ENCODE measurements at regions of chr11 and their contacts with region 1.

Region 1: DNA sequence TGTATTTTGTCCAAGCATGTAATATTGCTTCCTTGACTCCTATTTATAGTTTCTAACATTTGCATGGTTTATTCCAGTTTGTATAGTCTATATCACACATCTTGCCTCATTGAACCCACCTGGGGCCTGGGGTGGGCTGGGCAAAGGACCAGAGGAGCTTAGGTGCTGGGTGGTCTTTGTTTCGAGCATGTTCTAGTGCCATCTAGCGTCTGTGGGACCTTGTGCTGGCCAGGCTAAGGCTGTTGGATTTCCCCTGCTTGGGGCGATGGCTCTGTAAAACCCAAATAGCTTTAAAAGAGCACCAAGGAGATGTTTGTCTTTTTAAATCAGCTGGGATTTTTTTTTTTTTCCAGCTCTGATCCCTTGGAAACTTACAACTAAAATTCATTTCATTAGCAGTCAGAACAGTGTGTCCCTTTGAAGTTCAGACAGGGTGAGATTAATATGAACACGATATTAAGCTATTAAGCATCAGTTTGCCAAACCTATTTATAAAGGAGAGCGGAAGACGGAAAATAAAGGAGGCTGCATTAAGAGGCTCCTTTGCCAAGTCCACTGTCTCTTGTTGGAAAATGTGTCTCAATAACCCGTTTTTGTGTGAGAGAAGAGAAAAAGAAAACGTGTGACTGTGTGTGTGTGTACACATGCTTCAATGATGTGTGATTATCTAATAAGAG is 157.4 kb downstream of the COMMD9 start:
- DNase-seq: peak in 4 of 5 donors; percentile 48 to 57 (median 56)
- ATAC-seq: peak; percentile 75 to 86 (median 84)
- H3K4me3 ChIP-seq: no peak overlapping the region
- H3K27ac ChIP-seq: no peak overlapping the region
- H3K4me1 ChIP-seq: peaks cover 0 to 12% (median 0%) of the 10 kb centered on the region in 12 donors
- H3K27me3 ChIP-seq: peaks cover 0 to 8% (median 0%) of the 10 kb centered on the region in 9 donors
- CTCF ChIP-seq: peak; percentile 51 to 92 (median 74)
- POLR2A ChIP-seq: no peak

Region 2: GRCh38 chr11:35711173-35711910 is 420.5 kb before region 1 on chr11:
- intact Hi-C with region 1: loop called in 1 of 10 experiments (anchors 2 kb)
- DNase-seq: no peak
- ATAC-seq: no peak
- H3K4me3 ChIP-seq: no peak overlapping the region
- H3K27ac ChIP-seq: no peak overlapping the region
- H3K4me1 ChIP-seq: peaks cover 0 to 18% (median 2%) of the 10 kb centered on the region in 12 donors
- H3K27me3 ChIP-seq: no peaks in the 10 kb centered on the region
- CTCF ChIP-seq: peak in 2 of 12 donors; percentile 14 to 21
- POLR2A ChIP-seq: no peak

Region 3: DNA sequence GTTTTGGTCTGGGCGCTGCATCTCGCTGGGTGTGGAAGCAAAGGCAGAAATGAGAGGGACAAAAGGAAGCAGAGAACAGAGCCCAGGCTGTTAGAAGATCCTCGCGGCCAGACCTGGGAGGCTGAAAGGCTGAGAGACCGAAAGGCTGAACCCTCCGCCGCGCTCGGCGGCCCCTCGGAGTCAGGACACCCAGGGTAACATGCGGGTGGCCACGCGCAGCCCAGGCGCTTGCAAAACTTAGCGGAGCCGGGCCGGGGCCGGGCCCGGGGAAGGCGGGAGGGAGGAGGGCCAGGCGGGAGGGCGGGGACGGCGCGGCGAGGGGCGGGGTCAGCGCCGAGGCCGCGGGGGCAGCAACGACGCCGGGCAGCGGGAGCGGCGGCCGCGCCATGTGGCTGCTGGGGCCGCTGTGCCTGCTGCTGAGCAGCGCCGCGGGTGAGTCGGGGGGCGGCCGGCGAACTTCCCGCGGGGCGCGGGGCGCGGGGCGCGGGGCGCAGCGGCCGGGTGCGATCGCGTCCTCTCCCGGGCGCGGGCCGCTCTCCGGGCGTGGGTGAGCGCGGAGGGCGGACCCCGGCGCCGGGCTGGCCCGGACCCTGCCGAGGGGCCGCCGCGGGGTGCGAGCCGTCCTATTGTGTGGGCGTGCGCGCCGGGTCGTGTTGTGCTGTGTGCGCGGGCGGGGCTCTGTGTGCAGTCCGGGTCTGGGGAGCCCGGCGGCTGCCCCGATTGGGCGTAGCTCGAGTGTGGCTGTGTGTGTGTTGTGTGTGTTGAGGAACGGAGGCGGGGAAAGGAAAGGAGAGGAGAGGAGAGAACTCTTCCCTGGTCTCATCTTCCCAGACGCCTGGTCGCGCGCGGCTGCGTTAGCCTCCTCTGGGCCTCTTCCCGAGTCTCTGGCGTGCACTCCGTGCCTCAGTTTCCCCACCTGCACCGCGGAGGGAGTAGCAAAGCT is 187.9 kb before region 1 on chr11 and contains the start of gene LDLRAD3:
- intact Hi-C with region 1: loop called in 1 of 10 experiments (anchors 10 kb)
- DNase-seq: peak; percentile 76 to 91 (median 82)
- ATAC-seq: peak; percentile 67 to 94 (median 92)
- H3K4me3 ChIP-seq: peak within 1 kb of the TSS; percentile 9 to 77 (median 62)
- H3K27ac ChIP-seq: peak within 1 kb of the TSS in 10 of 12 donors; percentile 25 to 68 (median 60)
- H3K4me1 ChIP-seq: peaks cover 0 to 29% (median 9%) of the 10 kb centered on the region in 12 donors
- H3K27me3 ChIP-seq: peaks cover 0 to 6% (median 0%) of the 10 kb centered on the region in 9 donors
- CTCF ChIP-seq: no peak
- POLR2A ChIP-seq: no peak
- total RNA-seq, gene LDLRAD3: 1.5 to 7.7 (median 2.6) TPM

Region 4: GRCh38 chr11:36041988-36042611 is 89.8 kb before region 1 on chr11:
- intact Hi-C with region 1: loop called in 5 of 10 experiments (anchors 5 kb)
- DNase-seq: no peak
- ATAC-seq: peak in 1 of 4 donors; percentile 48
- H3K4me3 ChIP-seq: no peak overlapping the region
- H3K27ac ChIP-seq: no peak overlapping the region
- H3K4me1 ChIP-seq: peaks cover 0 to 4% (median 0%) of the 10 kb centered on the region in 12 donors
- H3K27me3 ChIP-seq: no peaks in the 10 kb centered on the region
- CTCF ChIP-seq: peak in 10 of 12 donors; percentile 21 to 60 (median 42)
- POLR2A ChIP-seq: no peak

Region 5: DNA sequence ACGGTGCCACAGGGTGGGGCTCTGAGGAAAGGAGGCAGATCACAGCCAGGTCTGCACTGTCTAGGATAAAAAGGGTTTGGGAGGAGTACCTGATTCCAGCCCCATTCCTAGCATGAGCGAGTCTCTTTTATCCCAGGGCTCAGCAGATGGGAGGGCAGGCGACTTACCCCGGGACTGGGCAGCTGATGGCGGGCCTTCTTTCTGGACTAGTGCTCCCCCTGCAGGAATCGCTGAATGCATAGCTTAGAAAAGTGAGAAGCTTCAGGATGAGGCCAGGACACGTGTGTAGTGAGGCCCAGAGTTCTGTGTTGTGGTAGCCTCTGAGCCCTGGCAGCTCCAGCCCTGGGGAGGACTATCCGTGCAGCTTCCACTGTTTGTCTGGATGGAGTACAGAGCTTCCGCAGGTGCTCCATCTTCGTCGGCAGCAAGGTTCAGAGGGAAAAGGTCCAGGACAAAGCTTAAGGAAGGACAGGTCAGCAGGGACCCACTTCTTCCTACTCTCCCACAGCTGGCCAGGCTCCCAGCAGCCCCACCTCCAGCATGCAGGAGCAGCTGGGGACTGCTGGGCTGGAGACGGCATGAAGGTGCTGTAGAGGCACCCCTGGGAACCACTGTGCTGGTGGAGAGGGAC is 127.0 kb after region 1 on chr11:
- intact Hi-C with region 1: loop called in 2 of 10 experiments (anchors 10 kb)
- DNase-seq: peak; percentile 44 to 73 (median 55)
- ATAC-seq: peak; percentile 59 to 92 (median 81)
- H3K4me3 ChIP-seq: no peak overlapping the region
- H3K27ac ChIP-seq: no peak overlapping the region
- H3K4me1 ChIP-seq: peaks cover 0 to 6% (median 0%) of the 10 kb centered on the region in 12 donors
- H3K27me3 ChIP-seq: peaks cover 0 to 15% (median 0%) of the 10 kb centered on the region in 9 donors
- CTCF ChIP-seq: peak; percentile 42 to 70 (median 56)
- POLR2A ChIP-seq: no peak

Region 6: DNA sequence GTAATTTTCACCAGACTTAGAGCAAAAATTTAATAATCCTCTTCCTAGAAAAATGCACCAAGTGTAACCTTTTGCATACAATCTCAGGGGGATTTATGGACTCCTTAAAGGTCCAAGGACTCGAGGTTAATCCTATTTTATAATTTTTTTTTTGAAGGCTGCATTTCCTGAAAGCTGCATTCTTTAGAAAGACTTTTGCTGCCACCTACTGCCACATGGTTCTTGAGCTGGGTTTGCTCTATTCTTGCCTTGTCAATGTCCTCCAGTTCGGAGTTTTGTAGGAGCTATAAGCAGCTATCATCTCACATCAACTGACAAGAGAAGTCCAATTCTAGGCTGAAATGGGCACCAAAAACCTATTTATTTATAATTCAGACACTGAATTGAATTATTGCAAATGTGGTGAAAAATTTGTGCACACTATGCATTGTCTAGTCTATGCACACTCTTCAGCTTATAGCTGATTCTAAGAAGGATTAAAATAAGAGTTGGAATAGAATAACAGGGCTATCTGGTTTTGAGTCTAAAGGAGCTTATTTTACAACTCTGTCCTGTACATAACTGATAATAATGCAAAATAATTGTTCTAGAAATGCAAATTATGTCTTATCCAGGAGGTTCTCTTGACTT is 347.0 kb after region 1 on chr11:
- intact Hi-C with region 1: loop called in 1 of 10 experiments (anchors 10 kb)
- DNase-seq: peak in 1 of 5 donors; percentile 30
- ATAC-seq: peak in 3 of 4 donors; percentile 70 to 80 (median 78)
- H3K4me3 ChIP-seq: no peak overlapping the region
- H3K27ac ChIP-seq: no peak overlapping the region
- H3K4me1 ChIP-seq: peaks cover 0 to 17% (median 5%) of the 10 kb centered on the region in 12 donors
- H3K27me3 ChIP-seq: no peaks in the 10 kb centered on the region
- CTCF ChIP-seq: peak; percentile 25 to 77 (median 62)
- POLR2A ChIP-seq: no peak

Measured in heart left ventricle (tissue), 16 donors.